ENCODE measurements at regions of chr10 and their contacts with region 1.

Region 1: GRCh38 chr10:11472158-11472753 is 139.2 kb downstream of the USP6NL start:
- DNase-seq: peak; percentile 84
- H3K4me3 Mint-ChIP-seq: no peak overlapping the region
- H3K27ac Mint-ChIP-seq: peak overlapping the region; percentile 28
- H3K4me1 Mint-ChIP-seq: no peaks in the 10 kb centered on the region
- H3K27me3 Mint-ChIP-seq: no peaks in the 10 kb centered on the region

Region 2: DNA sequence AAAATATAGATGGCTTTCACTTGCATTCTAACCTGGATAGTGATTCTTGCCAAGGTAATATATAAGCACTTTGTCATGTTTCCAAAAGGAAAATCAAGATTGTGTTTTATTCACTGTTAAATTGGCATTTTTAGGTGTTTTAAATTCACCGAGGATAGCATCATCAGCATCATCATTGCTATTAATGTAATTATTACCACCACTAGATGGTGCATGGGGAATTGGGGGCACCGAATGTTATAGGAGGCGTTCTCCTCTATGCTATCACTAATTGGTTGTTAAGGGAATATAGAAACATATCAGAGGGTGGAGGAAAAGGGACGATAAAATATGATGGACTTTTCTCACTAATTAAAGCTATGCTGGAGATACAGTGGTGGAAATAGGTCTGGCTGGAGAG is 359.1 kb before region 1 on chr10:
- CTCF ChIA-PET with region 1: no interaction called
- POLR2A ChIA-PET with region 1: no interaction called
- intact Hi-C with region 1: loop called (anchors 5 kb)
- DNase-seq: peak; percentile 19
- H3K4me3 Mint-ChIP-seq: no peak overlapping the region
- H3K27ac Mint-ChIP-seq: peak overlapping the region; percentile 10
- H3K4me1 Mint-ChIP-seq: peaks cover 20% of the 10 kb centered on the region
- H3K27me3 Mint-ChIP-seq: no peaks in the 10 kb centered on the region

Region 3: DNA sequence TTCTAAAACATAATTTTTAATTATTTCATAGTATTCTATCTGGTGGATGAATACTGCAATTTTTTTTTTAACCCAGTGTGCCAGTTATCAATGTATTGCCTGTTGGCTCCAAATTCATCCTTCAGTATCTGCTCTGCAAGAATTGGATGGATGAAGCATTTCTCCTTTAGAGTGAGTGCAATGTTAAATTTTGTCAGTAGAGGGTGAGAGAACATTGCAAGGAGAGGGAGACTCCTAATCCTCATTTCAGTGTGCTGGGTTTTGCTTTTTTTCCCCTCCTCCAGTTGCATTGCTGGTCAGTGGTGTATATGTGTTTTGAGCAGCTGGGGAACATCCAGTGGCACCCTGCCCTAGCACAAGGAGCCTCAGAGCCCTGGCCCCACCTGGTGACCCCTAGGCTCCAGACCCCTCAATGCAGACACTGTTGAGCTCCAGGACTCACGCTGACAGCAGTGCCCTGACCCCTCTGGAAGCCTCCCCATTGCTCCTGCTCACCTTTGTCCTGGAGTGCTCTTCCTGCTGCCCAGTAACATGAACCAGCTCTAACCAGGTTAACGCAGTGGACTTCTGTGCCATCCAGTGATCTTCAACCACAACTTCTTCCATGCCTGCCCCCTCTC is 60.2 kb before region 1 on chr10:
- CTCF ChIA-PET with region 1: no interaction called
- POLR2A ChIA-PET with region 1: no interaction called
- intact Hi-C with region 1: loop called (anchors 1 kb)
- DNase-seq: no peak
- H3K4me3 Mint-ChIP-seq: no peak overlapping the region
- H3K27ac Mint-ChIP-seq: no peak overlapping the region
- H3K4me1 Mint-ChIP-seq: peaks cover 17% of the 10 kb centered on the region
- H3K27me3 Mint-ChIP-seq: no peaks in the 10 kb centered on the region

Region 4: GRCh38 chr10:11434324-11434723 is 37.9 kb before region 1 on chr10:
- CTCF ChIA-PET with region 1: no interaction called
- POLR2A ChIA-PET with region 1: no interaction called
- intact Hi-C with region 1: loop called (anchors 2 kb)
- DNase-seq: no peak
- H3K4me3 Mint-ChIP-seq: no peak overlapping the region
- H3K27ac Mint-ChIP-seq: no peak overlapping the region
- H3K4me1 Mint-ChIP-seq: peaks cover 3% of the 10 kb centered on the region
- H3K27me3 Mint-ChIP-seq: no peaks in the 10 kb centered on the region

Region 5: GRCh38 chr10:11525503-11525902 is 53.2 kb after region 1 on chr10:
- CTCF ChIA-PET with region 1: no interaction called
- POLR2A ChIA-PET with region 1: no interaction called
- intact Hi-C with region 1: no loop called
- DNase-seq: no peak
- H3K4me3 Mint-ChIP-seq: no peak overlapping the region
- H3K27ac Mint-ChIP-seq: no peak overlapping the region
- H3K4me1 Mint-ChIP-seq: peaks cover 5% of the 10 kb centered on the region
- H3K27me3 Mint-ChIP-seq: no peaks in the 10 kb centered on the region

Region 6: GRCh38 chr10:11536228-11536627 is 64.0 kb after region 1 on chr10:
- CTCF ChIA-PET with region 1: no interaction called
- POLR2A ChIA-PET with region 1: no interaction called
- intact Hi-C with region 1: no loop called
- DNase-seq: no peak
- H3K4me3 Mint-ChIP-seq: no peak overlapping the region
- H3K27ac Mint-ChIP-seq: no peak overlapping the region
- H3K4me1 Mint-ChIP-seq: peaks cover 15% of the 10 kb centered on the region
- H3K27me3 Mint-ChIP-seq: no peaks in the 10 kb centered on the region